ENCODE measurements at regions of chr12 and their contacts with region 1.

Region 1: DNA sequence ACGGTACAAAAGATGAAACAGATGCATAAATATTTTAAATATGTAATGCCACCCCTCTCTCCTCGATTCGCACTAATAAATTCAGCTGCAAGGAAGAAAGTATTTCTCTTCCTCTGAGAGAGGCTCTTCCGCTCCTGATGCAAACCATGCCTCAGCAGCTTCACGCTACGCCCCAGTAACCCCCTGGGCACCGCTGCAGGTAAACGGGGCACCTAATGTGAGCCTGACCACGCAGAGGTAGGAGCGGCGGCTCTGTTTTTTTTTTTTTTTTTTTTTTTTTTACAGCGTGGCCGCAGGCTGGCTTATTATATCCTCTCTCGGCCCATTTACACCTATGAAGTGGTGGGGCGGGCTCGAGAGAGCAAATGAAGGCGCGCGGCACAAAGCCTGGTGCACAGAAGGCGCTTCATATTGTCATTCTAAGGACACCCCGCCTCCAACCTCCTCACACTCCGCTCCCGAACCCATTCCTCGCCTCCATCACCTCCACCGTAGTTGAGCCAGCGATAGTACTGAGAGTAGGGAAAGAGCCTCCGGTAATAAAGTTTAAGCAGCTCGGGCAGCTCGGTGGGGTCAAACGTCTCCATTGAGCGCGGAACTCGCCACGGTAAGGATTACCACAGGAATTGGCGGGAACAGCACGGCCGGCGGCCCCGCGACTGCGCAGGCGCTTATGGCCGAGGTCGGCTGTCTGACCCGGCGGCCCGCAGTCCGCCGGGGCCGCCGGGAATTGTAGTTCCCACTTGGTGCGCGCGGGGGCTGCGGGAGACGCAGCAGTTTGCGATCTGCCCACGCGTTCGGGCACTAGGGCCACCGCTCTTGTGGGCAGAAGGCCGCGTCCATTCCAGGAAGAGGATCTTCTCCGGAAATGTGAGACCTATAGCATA is at the start of gene PRIM1:
- DNase-seq: peak; percentile 76 to 89
- ATAC-seq: peak; percentile 90 to 95 (median 94)
- H3K4me3 ChIP-seq: peak within 1 kb of the TSS; percentile 93
- H3K4me3 Mint-ChIP-seq: peak within 1 kb of the TSS; percentile 94
- H3K27ac ChIP-seq: peak within 1 kb of the TSS; percentile 73
- H3K27ac Mint-ChIP-seq: peak within 1 kb of the TSS; percentile 81 to 82
- H3K4me1 ChIP-seq: peaks cover 9% of the 10 kb centered on the region
- H3K4me1 Mint-ChIP-seq: peaks cover 16 to 19% of the 10 kb centered on the region in 2 donors
- H3K27me3 ChIP-seq: no peaks in the 10 kb centered on the region
- H3K27me3 Mint-ChIP-seq: no peaks in the 10 kb centered on the region
- CTCF ChIP-seq: no peak
- total RNA-seq, gene PRIM1: 10.1 to 11.9 (median 10.4) TPM

Region 2: DNA sequence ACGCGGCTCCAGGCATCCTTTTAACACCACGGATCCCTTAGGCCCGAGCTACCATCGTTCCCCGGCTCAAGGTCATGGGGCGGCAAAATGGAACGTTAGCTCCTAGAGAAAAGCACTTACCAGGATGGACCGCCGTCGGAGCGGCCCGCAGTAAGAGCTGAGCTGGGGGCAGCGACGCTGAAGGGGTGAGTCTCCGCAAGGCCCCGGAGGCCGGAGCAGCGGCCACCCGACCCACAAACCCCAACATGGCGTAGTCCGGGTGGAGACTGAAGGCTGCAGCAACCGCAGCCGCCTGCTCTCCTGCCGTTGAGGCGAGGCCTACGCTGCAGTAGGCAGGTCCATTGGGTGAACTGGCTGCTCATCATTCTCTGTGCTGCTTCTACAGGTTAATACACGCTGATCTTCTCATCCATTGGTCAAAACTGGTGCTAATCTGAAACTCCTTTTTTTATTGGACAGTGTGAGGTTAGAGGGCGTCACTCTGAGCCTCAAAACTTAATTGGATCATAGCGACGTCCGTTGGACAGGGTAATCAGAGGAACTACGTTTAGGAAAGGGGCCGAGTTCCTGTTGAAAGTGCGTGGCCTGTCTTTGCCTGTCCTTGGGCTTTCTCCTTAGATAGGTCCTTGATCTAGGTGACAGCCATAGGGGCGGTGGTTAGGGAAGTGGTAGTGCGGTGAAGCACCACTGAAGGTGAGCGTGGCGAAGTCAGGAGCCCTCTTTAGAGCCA is 106.1 kb before region 1 on chr12 and contains the start of gene ATP5F1B:
- intact Hi-C with region 1: loop called (anchors 1 kb)
- DNase-seq: peak; percentile 84 to 97
- ATAC-seq: peak; percentile 96 to 99 (median 96)
- H3K4me3 ChIP-seq: peak within 1 kb of the TSS; percentile 98
- H3K4me3 Mint-ChIP-seq: peak within 1 kb of the TSS; percentile 96
- H3K27ac ChIP-seq: peak within 1 kb of the TSS; percentile 91
- H3K27ac Mint-ChIP-seq: peak within 1 kb of the TSS; percentile 92 to 97
- H3K4me1 ChIP-seq: peaks cover 18% of the 10 kb centered on the region
- H3K4me1 Mint-ChIP-seq: peaks cover 27 to 28% of the 10 kb centered on the region in 2 donors
- H3K27me3 ChIP-seq: no peaks in the 10 kb centered on the region
- H3K27me3 Mint-ChIP-seq: no peaks in the 10 kb centered on the region
- CTCF ChIP-seq: no peak
- total RNA-seq, gene ATP5F1B: 335 to 378 (median 342) TPM

Region 3: GRCh38 chr12:56724972-56725722 is 26.8 kb before region 1 on chr12 and contains the start of gene NACA:
- intact Hi-C with region 1: loop called (anchors 1 kb)
- DNase-seq: peak; percentile 92 to 99
- ATAC-seq: peak; percentile 92 to 98 (median 93)
- H3K4me3 ChIP-seq: peak within 1 kb of the TSS; percentile 99
- H3K4me3 Mint-ChIP-seq: peak within 1 kb of the TSS; percentile 99
- H3K27ac ChIP-seq: peak within 1 kb of the TSS; percentile 98
- H3K27ac Mint-ChIP-seq: peak within 1 kb of the TSS; percentile 98
- H3K4me1 ChIP-seq: peaks cover 38% of the 10 kb centered on the region
- H3K4me1 Mint-ChIP-seq: peaks cover 58 to 60% of the 10 kb centered on the region in 2 donors
- H3K27me3 ChIP-seq: no peaks in the 10 kb centered on the region
- H3K27me3 Mint-ChIP-seq: no peaks in the 10 kb centered on the region
- CTCF ChIP-seq: no peak
- total RNA-seq, gene NACA: 644 to 785 (median 695) TPM

Region 4: DNA sequence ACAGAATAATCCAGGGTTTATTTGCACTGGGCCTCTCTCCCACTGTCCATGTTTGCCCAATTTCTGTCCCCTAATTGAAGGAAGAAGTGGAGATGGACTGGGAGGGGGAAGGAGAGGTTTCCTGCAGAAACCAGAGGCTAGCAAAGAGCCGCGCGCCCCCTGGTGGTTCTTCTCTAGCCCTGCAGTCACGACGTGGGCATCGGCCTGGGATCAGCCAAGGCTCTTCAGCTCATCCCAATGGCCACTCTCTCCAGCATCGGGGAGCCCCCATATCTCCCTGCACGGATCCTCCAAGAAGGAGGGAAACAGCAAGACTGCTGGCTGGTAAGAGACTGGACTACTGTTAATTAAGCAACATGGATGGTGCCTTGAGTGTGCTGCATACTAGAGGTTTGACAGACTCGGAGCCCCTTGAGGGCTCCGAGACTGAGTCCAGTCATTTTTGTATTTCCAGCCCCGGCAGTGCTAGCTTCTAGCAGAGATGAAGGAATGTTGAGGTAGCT is 235.6 kb after region 1 on chr12:
- intact Hi-C with region 1: loop called (anchors 1 kb)
- DNase-seq: peak; percentile 67 to 85
- ATAC-seq: peak; percentile 82 to 91 (median 89)
- H3K4me3 ChIP-seq: no peak overlapping the region
- H3K4me3 Mint-ChIP-seq: peak overlapping the region; percentile 56
- H3K27ac ChIP-seq: no peak overlapping the region
- H3K27ac Mint-ChIP-seq: no peak overlapping the region
- H3K4me1 ChIP-seq: peaks cover 17% of the 10 kb centered on the region
- H3K4me1 Mint-ChIP-seq: peaks cover 8 to 15% of the 10 kb centered on the region in 2 donors
- H3K27me3 ChIP-seq: no peaks in the 10 kb centered on the region
- H3K27me3 Mint-ChIP-seq: peaks cover 3 to 12% of the 10 kb centered on the region in 2 donors
- CTCF ChIP-seq: peak; percentile 93

Region 5: DNA sequence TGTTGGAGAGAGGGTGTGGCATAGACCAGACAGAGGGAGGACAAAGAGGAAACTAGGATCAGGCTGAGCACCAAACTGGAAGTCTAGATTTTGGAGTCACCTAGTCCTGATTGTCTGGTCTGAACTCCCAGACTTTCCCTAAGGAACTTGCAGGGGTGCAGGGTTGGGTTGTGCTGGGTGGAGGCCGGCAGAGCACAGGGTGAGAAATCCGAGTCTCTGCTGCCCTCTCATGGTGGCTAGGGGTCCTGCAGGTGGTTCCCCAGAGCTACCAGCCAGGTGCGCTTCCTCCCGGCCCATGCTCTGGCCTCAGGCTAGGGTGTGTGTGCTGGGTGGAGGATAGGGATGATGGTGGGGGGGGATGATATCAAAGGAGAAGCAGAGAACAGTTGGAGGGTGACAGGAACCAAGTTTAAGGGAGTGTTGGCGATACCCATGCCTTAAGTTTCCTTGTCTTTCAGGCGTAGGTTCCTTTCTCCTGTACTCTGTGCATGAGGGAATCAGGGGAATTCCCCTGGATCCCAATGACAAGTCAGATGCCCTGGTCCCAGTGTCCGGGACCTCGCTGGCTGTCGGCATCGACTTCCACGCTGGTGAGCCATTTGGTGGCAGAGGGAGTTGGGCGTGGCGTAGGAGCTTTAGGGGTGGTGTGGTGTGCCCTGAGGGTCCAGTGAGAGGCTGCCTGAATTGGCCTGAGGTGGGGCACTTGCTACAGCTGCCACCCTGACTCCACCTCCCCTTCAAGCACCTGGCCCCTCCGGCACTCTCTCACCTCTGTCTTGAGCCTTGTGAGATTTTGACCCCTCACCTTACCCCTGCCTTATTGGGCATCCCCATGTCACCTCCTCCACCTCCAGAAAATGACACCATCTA is 431.2 kb after region 1 on chr12:
- intact Hi-C with region 1: loop called (anchors 10 kb)
- DNase-seq: peak; percentile 78 to 89
- ATAC-seq: peak; percentile 87 to 100 (median 98)
- H3K4me3 ChIP-seq: no peak overlapping the region
- H3K4me3 Mint-ChIP-seq: no peak overlapping the region
- H3K27ac ChIP-seq: no peak overlapping the region
- H3K27ac Mint-ChIP-seq: peak overlapping the region in 1 of 2 donors; percentile 58
- H3K4me1 ChIP-seq: no peaks in the 10 kb centered on the region
- H3K4me1 Mint-ChIP-seq: peaks cover 0 to 7% of the 10 kb centered on the region in 2 donors
- H3K27me3 ChIP-seq: no peaks in the 10 kb centered on the region
- H3K27me3 Mint-ChIP-seq: no peaks in the 10 kb centered on the region
- CTCF ChIP-seq: peak; percentile 85

Measured in natural killer cell (primary cell).